H1 (cell line): ENCODE measurements at regions of chr19 and their contacts with region 1.

Region 1: DNA sequence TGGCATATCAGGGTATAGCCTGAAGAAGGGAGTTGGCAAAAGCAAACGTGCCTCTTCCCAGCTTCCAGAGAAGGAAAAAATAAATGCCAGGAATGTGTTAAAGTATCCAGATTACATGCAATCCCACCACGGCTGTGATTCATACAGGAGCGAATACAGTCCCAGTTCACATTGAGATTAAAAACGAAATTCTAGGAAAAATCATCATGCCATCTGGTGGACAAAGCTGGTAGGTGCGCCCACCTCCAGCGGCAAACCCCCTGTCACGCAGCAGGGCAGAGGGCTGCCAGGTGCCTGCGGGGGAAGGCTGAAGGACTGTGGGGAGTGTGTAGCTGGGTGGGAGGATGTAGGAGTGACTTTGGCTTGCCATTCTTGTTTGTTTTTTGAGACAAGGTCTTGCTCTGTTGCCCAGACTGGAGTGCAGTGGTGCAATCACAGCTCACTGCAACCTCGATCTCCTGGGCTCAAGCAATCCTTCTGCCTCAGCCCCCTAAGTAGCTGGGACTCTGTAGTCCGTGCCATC is 6.4 kb upstream of the DMWD start:
- DNase-seq: peak in 1 of 2 experiments; percentile 83
- H3K4me3 ChIP-seq: no peak overlapping the region
- H3K27ac ChIP-seq: no peak overlapping the region
- H3K4me1 ChIP-seq: peaks cover 0 to 4% (median 2%) of the 10 kb centered on the region in 4 experiments; a peak in 4 of 7 replicates
- H3K27me3 ChIP-seq: no peaks in the 10 kb centered on the region
- CTCF ChIP-seq: peak; percentile 66 to 84 (median 77)
- EP300 ChIP-seq: no peak
- POLR2A ChIP-seq: no peak
- RAD21 ChIP-seq: peak; percentile 45 to 52

Region 2: GRCh38 chr19:45809643-45810159 is 10.6 kb after region 1 on chr19:
- CTCF ChIA-PET with region 1: interaction called, 107 read pairs
- POLR2A ChIA-PET with region 1: interaction called, 106 read pairs
- DNase-seq: no peak
- H3K4me3 ChIP-seq: no peak overlapping the region
- H3K27ac ChIP-seq: no peak overlapping the region
- H3K4me1 ChIP-seq: peaks cover 0 to 5% (median 4%) of the 10 kb centered on the region in 4 experiments; a peak in 5 of 7 replicates
- H3K27me3 ChIP-seq: peaks cover 0 to 2% (median 0%) of the 10 kb centered on the region in 4 experiments; a peak in 3 of 7 replicates
- CTCF ChIP-seq: no peak
- EP300 ChIP-seq: no peak
- POLR2A ChIP-seq: no peak
- RAD21 ChIP-seq: no peak